Mucosa of descending colon (tissue), 3 donors: ENCODE measurements at regions of chr17 and their contacts with region 1.

Region 1: GRCh38 chr17:33779225-33779591 is 475.9 kb upstream of the CCL2 start:
- DNase-seq: peak in 2 of 3 donors; percentile 33 to 53
- ATAC-seq: peak; percentile 67
- H3K4me3 ChIP-seq: no peak overlapping the region
- H3K4me1 ChIP-seq: no peaks in the 10 kb centered on the region
- CTCF ChIP-seq: peak; percentile 92

Region 2: GRCh38 chr17:34146440-34147043 is 367.3 kb after region 1 on chr17:
- intact Hi-C with region 1: loop called in 1 of 2 experiments (anchors 10 kb)
- DNase-seq: peak in 2 of 3 donors; percentile 79 to 81
- ATAC-seq: peak; percentile 75
- H3K4me3 ChIP-seq: no peak overlapping the region
- H3K4me1 ChIP-seq: no peaks in the 10 kb centered on the region
- CTCF ChIP-seq: peak; percentile 43